Breast epithelium (tissue), 4 donors: ENCODE measurements at regions of chr6 and their contacts with region 1.

Region 1: DNA sequence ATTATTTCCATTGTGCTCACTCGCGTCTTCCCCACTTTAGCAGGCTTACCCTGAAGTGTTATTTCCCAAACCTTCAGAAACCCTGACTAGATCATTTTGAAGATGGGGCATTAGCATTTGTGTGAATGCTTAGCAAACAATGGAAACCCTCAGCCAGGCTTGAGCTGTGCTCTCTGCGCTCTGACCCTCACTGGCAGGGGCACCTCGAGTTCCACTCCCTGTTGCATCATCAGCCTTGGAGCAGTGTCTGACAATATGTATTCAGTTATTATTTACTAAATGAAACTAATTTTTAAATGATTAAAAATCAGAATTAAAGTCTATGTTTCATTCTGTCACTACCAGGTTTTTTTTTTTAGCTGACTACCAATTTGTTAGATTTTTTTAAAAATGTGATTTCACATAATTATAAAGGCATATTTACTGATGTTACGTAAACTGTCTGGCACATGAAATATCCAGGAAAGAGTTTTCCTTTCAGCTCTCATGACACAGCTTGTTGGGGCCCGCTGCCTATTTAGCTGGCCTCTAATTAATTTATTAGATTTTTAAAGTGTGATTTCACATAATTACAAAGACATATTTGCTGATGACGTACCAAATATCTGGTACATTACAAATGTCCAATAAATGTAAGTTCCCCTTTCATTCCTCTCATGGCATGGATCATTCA is 155.2 kb downstream of the PACRG start:
- DNase-seq: no peak
- H3K4me3 ChIP-seq: no peak overlapping the region
- H3K27ac ChIP-seq: no peak overlapping the region
- H3K4me1 ChIP-seq: no peaks in the 10 kb centered on the region
- H3K27me3 ChIP-seq: no peaks in the 10 kb centered on the region
- CTCF ChIP-seq: no peak
- POLR2A ChIP-seq: no peak

Region 2: DNA sequence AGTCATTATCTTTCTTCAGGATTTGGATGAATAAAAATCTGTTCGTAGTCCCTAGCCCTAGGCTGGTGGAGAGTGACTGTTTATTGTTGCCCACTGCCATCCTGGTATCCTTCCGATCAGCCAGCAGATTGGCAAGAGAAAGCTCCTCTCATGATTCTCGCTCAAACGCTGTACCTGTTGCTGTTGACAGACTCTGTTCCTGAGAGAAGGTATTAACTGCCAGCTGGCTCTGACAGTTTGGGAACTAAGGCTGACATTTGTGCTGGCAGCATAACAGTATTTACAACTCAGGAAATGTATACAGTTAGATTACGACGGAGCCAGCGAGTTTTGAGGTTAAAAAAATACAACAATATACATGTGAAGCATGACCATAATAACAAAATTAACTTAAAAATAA is 829.9 kb before region 1 on chr6:
- intact Hi-C with region 1: loop called (anchors 5 kb)
- DNase-seq: no peak
- H3K4me3 ChIP-seq: no peak overlapping the region
- H3K27ac ChIP-seq: no peak overlapping the region
- H3K4me1 ChIP-seq: no peaks in the 10 kb centered on the region
- H3K27me3 ChIP-seq: no peaks in the 10 kb centered on the region
- CTCF ChIP-seq: no peak
- POLR2A ChIP-seq: no peak